Esophagus muscularis mucosa (tissue), 4 donors: ENCODE measurements at regions of chr18 and their contacts with region 1.

Region 1: DNA sequence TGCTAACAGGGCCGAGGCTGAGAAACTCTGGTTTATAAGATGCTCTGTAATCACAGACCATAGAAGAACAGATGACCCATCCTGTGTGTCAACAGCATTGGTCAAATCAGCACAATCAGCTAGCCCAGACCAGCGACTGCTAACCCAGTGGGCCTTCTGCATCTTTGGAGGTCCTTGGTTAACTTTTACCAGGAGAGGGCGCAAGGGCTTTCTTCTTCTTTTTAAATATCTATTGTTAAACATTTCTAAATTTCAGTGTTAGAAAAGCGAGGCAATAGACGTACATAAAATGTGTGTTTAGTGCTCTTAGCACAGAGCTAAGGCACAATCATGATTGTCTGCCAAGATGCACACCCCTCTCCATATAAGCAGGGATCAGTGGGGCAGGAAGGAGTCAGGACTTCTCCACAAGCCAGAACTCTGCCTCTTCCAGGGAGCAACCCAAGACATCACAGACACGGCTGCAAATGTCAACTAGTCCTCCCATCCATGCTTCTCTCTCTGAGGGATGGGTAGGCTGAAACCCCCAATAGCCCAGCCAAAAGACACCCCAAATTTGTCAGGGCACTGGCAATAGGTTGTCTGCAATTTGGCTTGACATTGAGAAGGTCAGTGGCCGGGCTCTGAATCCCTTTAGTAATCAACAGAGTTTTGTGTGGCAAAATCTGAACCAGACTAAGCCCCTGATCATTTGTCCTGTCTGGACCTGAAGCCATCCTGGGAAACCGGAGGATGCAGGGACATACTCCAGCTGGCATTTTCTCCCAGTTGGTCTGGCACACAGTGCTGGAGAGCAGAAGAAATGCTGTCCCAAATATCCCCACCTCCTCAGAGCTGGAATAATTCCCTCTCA is 188.2 kb downstream of the BCL2 start:
- DNase-seq: no peak
- H3K4me3 ChIP-seq: peak overlapping the region in 1 of 4 donors; percentile 9
- H3K27ac ChIP-seq: peak overlapping the region; percentile 39 to 64 (median 58)
- H3K4me1 ChIP-seq: peaks cover 10 to 24% (median 23%) of the 10 kb centered on the region in 4 donors
- H3K27me3 ChIP-seq: no peaks in the 10 kb centered on the region
- CTCF ChIP-seq: peak; percentile 68 to 75 (median 71)
- EP300 ChIP-seq: no peak
- POLR2A ChIP-seq: no peak

Region 2: GRCh38 chr18:63016270-63016669 is 115.1 kb before region 1 on chr18:
- intact Hi-C with region 1: loop called (anchors 5 kb)
- DNase-seq: no peak
- H3K4me3 ChIP-seq: no peak overlapping the region
- H3K27ac ChIP-seq: no peak overlapping the region
- H3K4me1 ChIP-seq: no peaks in the 10 kb centered on the region
- H3K27me3 ChIP-seq: no peaks in the 10 kb centered on the region
- CTCF ChIP-seq: peak; percentile 68 to 79 (median 75)
- EP300 ChIP-seq: no peak
- POLR2A ChIP-seq: no peak

Region 3: GRCh38 chr18:63177919-63178821 is 46.8 kb after region 1 on chr18:
- intact Hi-C with region 1: loop called (anchors 5 kb)
- DNase-seq: no peak
- H3K4me3 ChIP-seq: no peak overlapping the region
- H3K27ac ChIP-seq: peak overlapping the region in 1 of 4 donors; percentile 30
- H3K4me1 ChIP-seq: peaks cover 24 to 58% (median 52%) of the 10 kb centered on the region in 4 donors
- H3K27me3 ChIP-seq: no peaks in the 10 kb centered on the region
- CTCF ChIP-seq: no peak
- EP300 ChIP-seq: no peak
- POLR2A ChIP-seq: no peak

Region 4: DNA sequence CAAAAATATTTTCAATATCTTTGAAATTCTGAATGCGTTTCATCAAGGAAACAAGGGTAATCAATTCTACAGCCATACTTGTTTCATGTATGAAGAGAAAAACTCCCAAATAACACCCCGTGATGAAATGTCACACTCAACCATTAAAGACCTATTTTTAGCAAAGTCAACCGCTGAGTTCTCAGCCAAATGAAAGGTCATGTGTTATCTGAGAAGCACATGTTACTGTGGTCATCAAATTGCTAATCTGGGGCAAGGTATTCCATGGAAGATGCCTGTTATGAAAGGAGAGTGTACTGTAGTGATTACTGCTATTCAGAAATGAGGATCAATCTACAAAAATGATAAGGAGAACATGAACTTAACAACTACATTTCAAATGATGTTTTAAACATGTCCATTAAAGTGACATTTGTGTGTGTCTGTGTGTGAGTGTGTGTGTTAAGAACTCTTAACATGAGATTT is 61.6 kb after region 1 on chr18:
- intact Hi-C with region 1: no loop called
- DNase-seq: no peak
- H3K4me3 ChIP-seq: no peak overlapping the region
- H3K27ac ChIP-seq: no peak overlapping the region
- H3K4me1 ChIP-seq: peaks cover 3 to 11% (median 7%) of the 10 kb centered on the region in 4 donors
- H3K27me3 ChIP-seq: no peaks in the 10 kb centered on the region
- CTCF ChIP-seq: no peak
- EP300 ChIP-seq: no peak
- POLR2A ChIP-seq: no peak

Region 5: DNA sequence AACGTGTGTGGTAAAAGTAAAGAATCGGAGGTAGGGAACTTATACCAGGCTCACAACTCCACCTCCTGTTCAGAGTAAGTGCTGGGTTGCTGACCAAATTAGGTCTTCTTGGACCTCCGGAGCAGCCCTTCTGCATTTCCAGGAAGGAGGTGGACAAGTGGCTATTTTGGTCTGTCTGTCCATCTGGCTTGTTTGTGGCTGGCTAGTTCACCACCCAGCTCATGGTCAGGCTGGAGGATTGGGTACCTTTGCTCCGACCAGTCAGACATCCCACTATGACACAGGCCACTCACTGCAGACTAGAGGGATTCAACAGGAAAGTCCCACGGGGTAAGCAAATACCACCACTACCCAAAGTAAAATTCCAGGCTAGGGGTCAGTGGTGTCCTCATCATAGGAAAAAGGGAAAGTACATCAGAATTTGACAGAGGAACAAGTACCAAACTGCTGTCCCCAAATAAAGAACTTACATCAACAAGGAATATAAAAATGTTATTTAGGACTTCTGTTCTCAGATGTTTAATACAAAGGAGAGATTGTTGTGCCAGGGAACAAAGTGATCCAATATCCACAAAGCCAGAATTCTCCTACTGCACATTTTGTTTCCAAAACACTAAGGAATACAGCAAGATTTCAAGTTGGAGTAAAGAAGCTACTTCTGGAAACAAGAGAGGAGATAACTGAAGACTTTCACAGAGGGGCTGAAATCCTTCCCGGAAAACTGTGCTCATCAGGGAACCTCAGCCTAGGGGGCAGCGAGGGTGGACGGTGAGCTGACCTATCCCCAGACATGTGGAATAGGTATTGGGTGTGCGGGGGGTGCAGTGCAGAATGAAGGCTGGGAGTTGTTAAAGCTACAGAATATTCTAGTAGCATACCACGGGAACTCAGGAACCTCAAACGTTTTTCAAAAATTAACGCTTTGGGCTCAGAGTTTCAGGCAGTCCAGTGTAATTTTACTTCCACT is 131.3 kb after region 1 on chr18:
- intact Hi-C with region 1: loop called (anchors 5 kb)
- DNase-seq: no peak
- H3K4me3 ChIP-seq: peak overlapping the region; percentile 24 to 44 (median 27)
- H3K27ac ChIP-seq: peak overlapping the region; percentile 84 to 89 (median 87)
- H3K4me1 ChIP-seq: peaks cover 21 to 79% (median 77%) of the 10 kb centered on the region in 4 donors
- H3K27me3 ChIP-seq: no peaks in the 10 kb centered on the region
- CTCF ChIP-seq: peak; percentile 28 to 45 (median 41)
- EP300 ChIP-seq: peak; percentile 60
- POLR2A ChIP-seq: no peak